Activated CD8-positive, alpha-beta memory T cell treated with anti-CD3 and anti-CD28 coated beads, Interleukin-2, amount 10 ng/mL, durations not matched to agents 7 days and 5 days (primary cell): ENCODE measurements at regions of chr3 and their contacts with region 1.

Region 1: GRCh38 chr3:196251918-196252317 is 35.6 kb downstream of the SLC51A start:
- DNase-seq: no peak
- ATAC-seq: no peak
- H3K4me3 Mint-ChIP-seq: no peak overlapping the region
- H3K27ac Mint-ChIP-seq: no peak overlapping the region
- H3K4me1 Mint-ChIP-seq: peaks cover 10% of the 10 kb centered on the region
- H3K27me3 Mint-ChIP-seq: no peaks in the 10 kb centered on the region

Region 2: GRCh38 chr3:196263819-196264218 is 11.9 kb after region 1 on chr3:
- CTCF ChIA-PET with region 1: interaction called, 13 read pairs
- DNase-seq: no peak
- ATAC-seq: no peak
- H3K4me3 Mint-ChIP-seq: no peak overlapping the region
- H3K27ac Mint-ChIP-seq: no peak overlapping the region
- H3K4me1 Mint-ChIP-seq: peaks cover 10% of the 10 kb centered on the region
- H3K27me3 Mint-ChIP-seq: no peaks in the 10 kb centered on the region

Region 3: GRCh38 chr3:196280689-196281440 is 28.9 kb after region 1 on chr3:
- CTCF ChIA-PET with region 1: interaction called, 11 read pairs
- DNase-seq: peak; percentile 80
- ATAC-seq: peak; percentile 59
- H3K4me3 Mint-ChIP-seq: peak overlapping the region; percentile 4
- H3K27ac Mint-ChIP-seq: peak overlapping the region; percentile 48
- H3K4me1 Mint-ChIP-seq: peaks cover 67% of the 10 kb centered on the region
- H3K27me3 Mint-ChIP-seq: no peaks in the 10 kb centered on the region

Region 4: GRCh38 chr3:196406811-196407470 is 155.0 kb after region 1 on chr3:
- CTCF ChIA-PET with region 1: no interaction called
- DNase-seq: no peak
- ATAC-seq: no peak
- H3K4me3 Mint-ChIP-seq: no peak overlapping the region
- H3K27ac Mint-ChIP-seq: no peak overlapping the region
- H3K4me1 Mint-ChIP-seq: peaks cover 9% of the 10 kb centered on the region
- H3K27me3 Mint-ChIP-seq: no peaks in the 10 kb centered on the region